Ovary (tissue), 10 donors: ENCODE measurements at regions of chr17 and their contacts with region 1.

Region 1: DNA sequence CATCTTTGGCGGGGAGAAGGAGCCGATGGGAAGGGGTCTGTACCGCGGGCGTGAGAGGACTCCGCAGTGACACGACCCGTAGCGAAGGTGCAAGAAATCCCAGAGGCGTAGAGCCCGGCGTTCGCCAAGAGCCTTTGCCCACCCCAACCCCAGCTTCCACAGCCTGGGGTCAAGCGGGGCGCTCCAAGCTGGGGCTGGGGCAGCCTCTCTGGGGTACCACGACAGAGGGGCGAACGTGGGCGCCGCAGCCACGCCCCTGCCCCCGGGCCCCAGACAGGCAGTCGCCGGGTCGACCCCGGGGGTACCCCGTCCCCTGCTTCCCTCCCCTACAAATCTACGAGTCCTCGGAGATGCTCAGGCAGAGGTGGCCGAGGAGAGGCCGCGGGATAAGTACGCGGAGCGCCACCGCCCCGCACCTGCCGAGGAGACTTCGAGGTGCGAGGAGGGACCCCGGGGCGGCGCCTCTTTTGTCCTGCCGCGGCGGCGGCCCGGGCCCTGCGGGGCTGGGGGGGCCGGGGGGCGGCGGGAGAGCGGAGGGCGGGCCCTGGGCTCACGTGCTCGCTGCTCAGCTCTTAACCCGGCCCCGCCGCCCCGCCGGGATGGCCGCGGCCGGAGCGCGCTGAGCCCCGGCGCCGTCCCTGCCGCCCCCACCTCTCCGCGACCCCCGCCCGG is at the start of gene ADAM11:
- DNase-seq: no peak
- H3K4me3 ChIP-seq: peak within 1 kb of the TSS; percentile 37
- H3K27ac ChIP-seq: no peak within 1 kb of the TSS
- H3K4me1 ChIP-seq: peaks cover 4% of the 10 kb centered on the region
- H3K27me3 ChIP-seq: no peaks in the 10 kb centered on the region
- CTCF ChIP-seq: no peak
- EP300 ChIP-seq: no peak
- POLR2A ChIP-seq: no peak
- total RNA-seq, gene ADAM11: 0.12 to 2.3 (median 1.5) TPM

Region 2: DNA sequence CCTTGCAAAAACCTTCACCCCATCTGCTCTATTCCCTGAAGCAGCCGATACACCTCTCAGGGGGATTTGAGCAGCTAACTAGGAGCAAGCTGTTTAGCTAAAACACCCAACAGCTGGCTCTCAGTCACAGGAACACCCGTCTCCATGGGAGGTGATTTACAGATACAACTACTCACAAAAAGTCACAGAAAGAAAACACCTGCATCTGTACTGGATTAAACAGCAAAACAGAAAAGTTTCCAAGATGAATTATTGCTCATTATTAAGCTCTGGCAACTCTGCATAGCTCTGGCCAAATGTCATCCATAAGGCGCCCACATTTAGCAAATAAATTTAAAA is 49.2 kb after region 1 on chr17:
- intact Hi-C with region 1: loop called in 1 of 4 experiments (anchors 1 kb)
- DNase-seq: no peak
- H3K4me3 ChIP-seq: no peak overlapping the region
- H3K27ac ChIP-seq: no peak overlapping the region
- H3K4me1 ChIP-seq: peaks cover 2% of the 10 kb centered on the region
- H3K27me3 ChIP-seq: no peaks in the 10 kb centered on the region
- CTCF ChIP-seq: no peak
- EP300 ChIP-seq: no peak
- POLR2A ChIP-seq: no peak